ENCODE measurements at regions of chr1 and their contacts with region 1.

Region 1: GRCh38 chr1:149886396-149887195 is 12.8 kb upstream of the BOLA1 start:
- DNase-seq: peak; percentile 94
- ATAC-seq: peak; percentile 59
- H3K4me3 Mint-ChIP-seq: no peak overlapping the region
- H3K27ac Mint-ChIP-seq: no peak overlapping the region
- H3K4me1 Mint-ChIP-seq: peaks cover 19% of the 10 kb centered on the region
- H3K27me3 Mint-ChIP-seq: no peaks in the 10 kb centered on the region

Region 2: DNA sequence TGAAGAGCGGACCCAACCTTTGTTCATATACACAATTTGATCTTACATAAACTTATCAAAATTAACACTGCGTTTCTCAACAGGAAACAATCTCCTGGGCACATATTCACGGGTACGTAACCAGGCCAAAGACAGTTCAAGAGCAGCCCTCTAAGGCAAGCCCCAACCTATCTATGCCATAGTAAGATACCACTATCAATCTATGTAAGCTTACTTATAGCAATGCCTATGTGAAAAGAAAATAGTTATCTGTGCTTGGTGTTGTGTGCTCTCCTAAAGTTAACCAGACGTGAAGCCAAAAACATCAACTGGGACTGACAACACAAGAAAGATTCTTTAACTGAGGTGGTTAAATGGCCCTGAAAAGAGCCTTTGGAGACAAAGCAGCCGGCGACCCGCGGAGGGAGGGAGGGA is 36.6 kb before region 1 on chr1:
- CTCF ChIA-PET with region 1: interaction called, 9 read pairs
- POLR2A ChIA-PET with region 1: interaction called, 310 read pairs
- DNase-seq: peak; percentile 34
- ATAC-seq: no peak
- H3K4me3 Mint-ChIP-seq: peak overlapping the region; percentile 83
- H3K27ac Mint-ChIP-seq: peak overlapping the region; percentile 95
- H3K4me1 Mint-ChIP-seq: peaks cover 38% of the 10 kb centered on the region
- H3K27me3 Mint-ChIP-seq: no peaks in the 10 kb centered on the region

Region 3: DNA sequence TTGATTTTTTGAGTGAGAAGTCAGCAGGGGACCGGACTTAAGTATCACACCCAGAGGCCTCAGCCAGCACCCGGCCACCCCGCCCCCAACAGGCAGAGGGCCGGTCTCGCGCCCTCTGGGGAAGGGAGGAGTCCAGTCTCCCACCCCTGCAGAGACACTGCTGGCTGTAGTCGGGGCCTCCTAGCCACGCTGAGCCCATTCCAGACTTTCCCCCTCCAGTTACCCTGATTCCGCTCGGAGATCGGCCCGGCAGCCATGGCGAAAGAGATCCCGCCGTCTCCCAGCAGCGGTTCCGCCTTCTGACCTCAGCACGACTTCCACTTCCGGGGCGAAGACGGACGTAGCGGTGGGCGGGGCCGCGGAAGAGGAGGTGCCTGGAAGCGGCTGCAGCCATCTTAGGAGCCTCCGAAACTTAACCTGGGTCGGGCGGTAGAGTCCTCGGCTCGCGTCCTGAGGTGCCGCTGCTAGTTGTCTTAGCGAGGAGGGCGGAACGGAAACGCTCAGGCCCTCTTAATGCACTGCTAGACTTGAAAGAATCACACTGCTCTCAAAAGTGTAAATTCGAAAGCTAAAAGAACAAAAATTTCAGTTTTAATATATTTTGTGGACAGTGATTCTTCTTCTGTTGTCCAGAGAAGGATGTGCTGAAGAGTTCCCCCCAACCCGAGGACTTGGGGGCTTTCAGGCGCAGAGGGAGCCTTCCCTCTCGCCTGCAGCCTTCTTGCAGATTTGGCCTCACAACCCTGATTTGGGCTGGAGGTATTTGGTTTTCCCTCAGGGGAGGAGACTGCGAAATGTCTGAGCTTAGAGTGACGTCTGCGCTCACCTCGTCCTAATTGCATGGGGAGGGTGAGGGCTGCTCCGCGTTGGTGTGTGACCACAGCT is 41.1 kb after region 1 on chr1 and contains the start of gene SF3B4:
- CTCF ChIA-PET with region 1: interaction called, 6 read pairs
- POLR2A ChIA-PET with region 1: interaction called, 157 read pairs
- DNase-seq: peak; percentile 98
- ATAC-seq: peak; percentile 97
- H3K4me3 Mint-ChIP-seq: peak within 1 kb of the TSS; percentile 96
- H3K27ac Mint-ChIP-seq: peak within 1 kb of the TSS; percentile 93
- H3K4me1 Mint-ChIP-seq: peaks cover 57% of the 10 kb centered on the region
- H3K27me3 Mint-ChIP-seq: no peaks in the 10 kb centered on the region
- total RNA-seq, gene SF3B4: 102 to 106 TPM

Region 4: GRCh38 chr1:149962123-149962548 is 75.5 kb after region 1 on chr1:
- CTCF ChIA-PET with region 1: interaction called, 11 read pairs
- POLR2A ChIA-PET with region 1: interaction called, 31 read pairs
- DNase-seq: peak; percentile 62
- ATAC-seq: peak; percentile 91
- H3K4me3 Mint-ChIP-seq: no peak overlapping the region
- H3K27ac Mint-ChIP-seq: no peak overlapping the region
- H3K4me1 Mint-ChIP-seq: peaks cover 16% of the 10 kb centered on the region
- H3K27me3 Mint-ChIP-seq: no peaks in the 10 kb centered on the region

Region 5: DNA sequence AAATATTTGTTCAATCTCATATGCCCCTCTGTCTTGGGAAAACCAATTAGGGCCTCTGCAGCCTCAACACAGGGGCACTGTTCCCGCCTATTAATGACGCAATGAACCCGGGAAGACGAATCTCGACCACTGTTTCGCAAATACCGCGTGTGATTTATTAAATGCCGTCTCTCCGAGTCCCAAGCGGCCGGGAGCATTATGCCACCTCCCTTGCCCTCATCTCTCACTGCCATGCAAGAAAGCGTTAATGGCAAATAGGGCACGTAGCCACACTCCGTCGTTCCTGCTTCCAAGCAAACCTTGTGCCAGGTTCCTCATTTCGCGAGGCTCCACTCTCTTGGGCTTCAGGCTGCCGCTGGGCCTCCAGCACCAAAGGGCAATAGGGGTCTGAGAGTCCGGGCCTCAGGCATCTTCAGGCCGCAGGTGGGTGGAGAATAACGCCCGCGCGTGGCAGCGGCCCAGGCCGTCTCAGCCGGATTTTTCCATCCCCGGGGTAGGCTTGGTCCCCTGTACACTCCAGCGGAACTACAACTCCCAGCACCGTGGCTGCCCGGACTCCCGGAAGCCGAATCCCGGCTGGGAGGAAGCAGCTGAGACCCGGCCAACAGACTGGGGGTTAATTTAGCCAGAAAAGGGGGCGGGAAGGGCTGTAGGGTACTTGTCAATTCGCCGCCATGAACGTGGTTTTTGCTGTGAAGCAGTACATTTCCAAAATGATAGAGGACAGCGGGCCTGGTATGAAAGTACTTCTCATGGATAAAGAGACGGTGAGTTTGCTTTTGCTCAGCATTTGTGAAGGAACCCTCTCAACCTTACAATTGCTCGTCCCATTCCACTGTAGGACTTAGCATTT is 180.8 kb after region 1 on chr1 and contains the start of gene VPS45:
- CTCF ChIA-PET with region 1: interaction called, 6 read pairs
- POLR2A ChIA-PET with region 1: interaction called, 35 read pairs
- DNase-seq: peak; percentile 90
- ATAC-seq: peak; percentile 91
- H3K4me3 Mint-ChIP-seq: peak within 1 kb of the TSS; percentile 95
- H3K27ac Mint-ChIP-seq: peak within 1 kb of the TSS; percentile 91
- H3K4me1 Mint-ChIP-seq: peaks cover 38% of the 10 kb centered on the region
- H3K27me3 Mint-ChIP-seq: no peaks in the 10 kb centered on the region
- total RNA-seq, gene VPS45: 36.1 to 40.0 TPM

Region 6: DNA sequence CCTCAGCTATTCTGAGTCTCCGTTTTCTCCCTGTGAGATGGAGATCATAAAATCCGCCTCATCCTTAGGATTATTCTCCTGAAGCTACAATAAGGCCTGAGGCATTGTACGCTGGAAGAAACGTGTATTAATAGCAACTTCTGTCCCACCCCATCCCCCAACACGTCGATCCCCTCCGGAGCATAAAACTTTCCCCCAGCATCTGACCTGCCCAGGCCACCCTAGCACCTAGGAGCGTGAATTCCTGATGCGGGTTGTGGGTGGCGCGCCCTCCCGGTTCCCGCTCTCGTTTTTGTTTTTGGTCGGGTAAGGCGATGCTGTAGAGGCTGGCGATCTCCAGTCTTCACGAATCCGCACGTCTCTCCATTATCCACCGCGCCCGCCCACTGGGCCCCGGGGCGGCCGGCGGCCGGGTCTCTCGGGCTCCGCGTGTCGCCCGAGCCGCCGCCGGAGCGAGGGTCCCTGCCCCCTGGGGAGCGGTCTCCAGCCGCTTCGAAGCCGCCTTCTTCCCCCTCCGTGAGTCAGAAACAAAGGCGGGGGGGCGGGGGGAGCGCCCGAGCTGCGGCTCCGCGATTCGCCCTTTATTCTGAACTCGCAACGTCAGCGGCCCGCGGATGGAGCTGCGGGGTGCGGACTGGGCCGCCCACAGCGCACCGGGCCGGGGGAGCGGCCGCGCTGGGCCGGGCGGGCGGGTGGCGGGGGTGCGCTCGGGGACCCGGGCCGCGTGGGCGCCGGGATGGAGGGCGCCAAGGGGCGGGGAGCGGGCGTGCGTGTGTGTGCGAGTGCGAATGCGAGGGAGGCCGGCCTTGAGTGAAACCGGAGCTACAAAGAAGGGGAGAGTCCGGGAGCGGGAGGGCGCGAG is 262.9 kb after region 1 on chr1 and contains the start of gene PLEKHO1:
- CTCF ChIA-PET with region 1: no interaction called
- POLR2A ChIA-PET with region 1: interaction called, 44 read pairs
- DNase-seq: peak; percentile 86
- ATAC-seq: peak; percentile 73
- H3K4me3 Mint-ChIP-seq: peak within 1 kb of the TSS; percentile 93
- H3K27ac Mint-ChIP-seq: peak within 1 kb of the TSS; percentile 94
- H3K4me1 Mint-ChIP-seq: peaks cover 70% of the 10 kb centered on the region
- H3K27me3 Mint-ChIP-seq: no peaks in the 10 kb centered on the region
- total RNA-seq, gene PLEKHO1: 138 to 154 TPM

Region 7: GRCh38 chr1:150578965-150579798 is 692.6 kb after region 1 on chr1 and contains the start of gene MCL1:
- CTCF ChIA-PET with region 1: no interaction called
- POLR2A ChIA-PET with region 1: interaction called, 20 read pairs
- DNase-seq: peak; percentile 94
- ATAC-seq: peak; percentile 75
- H3K4me3 Mint-ChIP-seq: peak within 1 kb of the TSS; percentile 97
- H3K27ac Mint-ChIP-seq: peak within 1 kb of the TSS; percentile 98
- H3K4me1 Mint-ChIP-seq: peaks cover 39% of the 10 kb centered on the region
- H3K27me3 Mint-ChIP-seq: no peaks in the 10 kb centered on the region
- total RNA-seq, gene MCL1: 249 to 261 TPM

Measured in activated CD8-positive, alpha-beta T cell treated with anti-CD3 and anti-CD28 coated beads, Interleukin-2, amount 10 ng/mL, durations not matched to agents 7 days and 5 days (primary cell).